MCF 10A (cell line): ENCODE measurements at regions of chr2 and their contacts with region 1.

Region 1: DNA sequence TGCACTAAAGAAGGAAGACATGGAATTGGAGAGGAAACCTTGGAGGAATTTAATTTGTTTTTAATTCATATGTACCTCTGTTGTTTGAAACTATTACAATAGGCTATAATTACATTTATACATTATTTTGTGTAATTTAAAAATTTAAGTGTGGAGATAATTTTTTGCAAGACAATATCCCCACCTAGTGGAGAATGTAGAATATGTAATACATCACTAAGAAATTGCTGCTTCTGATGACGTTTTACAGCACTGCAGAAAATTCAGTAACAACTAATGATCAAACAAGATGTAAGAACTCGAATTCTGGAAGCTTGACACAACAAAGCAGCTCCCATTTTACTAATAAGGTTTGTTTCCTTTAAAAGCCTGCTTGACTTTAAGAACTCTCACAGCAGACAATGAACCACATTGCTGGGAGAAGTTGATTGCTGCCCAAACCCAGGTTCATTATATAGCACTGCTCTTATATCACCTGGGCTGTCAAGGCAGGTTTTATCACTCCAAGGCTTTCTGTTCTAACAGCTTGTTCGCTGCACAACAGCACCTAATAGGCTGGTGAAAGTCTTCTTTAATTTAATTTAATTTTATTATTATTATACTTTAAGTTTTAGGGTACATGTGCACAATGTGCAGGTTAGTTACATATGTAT is 53.4 kb downstream of the THADA start:
- DNase-seq: peak; percentile 64
- H3K4me3 Mint-ChIP-seq: no peak overlapping the region
- H3K27ac Mint-ChIP-seq: no peak overlapping the region
- H3K4me1 Mint-ChIP-seq: peaks cover 14% of the 10 kb centered on the region
- H3K27me3 Mint-ChIP-seq: no peaks in the 10 kb centered on the region
- CTCF ChIP-seq: peak; percentile 40

Region 2: GRCh38 chr2:42810121-42810970 is 732.1 kb before region 1 on chr2:
- CTCF ChIA-PET with region 1: no interaction called
- POLR2A ChIA-PET with region 1: interaction called, 10 read pairs
- intact Hi-C with region 1: no loop called
- DNase-seq: peak; percentile 92
- H3K4me3 Mint-ChIP-seq: peak overlapping the region; percentile 80
- H3K27ac Mint-ChIP-seq: peak overlapping the region; percentile 84
- H3K4me1 Mint-ChIP-seq: peaks cover 13% of the 10 kb centered on the region
- H3K27me3 Mint-ChIP-seq: no peaks in the 10 kb centered on the region
- CTCF ChIP-seq: no peak

Region 3: GRCh38 chr2:42944779-42945415 is 597.5 kb before region 1 on chr2:
- CTCF ChIA-PET with region 1: interaction called, 23 read pairs
- POLR2A ChIA-PET with region 1: interaction called, 11 read pairs
- intact Hi-C with region 1: loop called (anchors 1 kb)
- DNase-seq: no peak
- H3K4me3 Mint-ChIP-seq: no peak overlapping the region
- H3K27ac Mint-ChIP-seq: no peak overlapping the region
- H3K4me1 Mint-ChIP-seq: peaks cover 10% of the 10 kb centered on the region
- H3K27me3 Mint-ChIP-seq: no peaks in the 10 kb centered on the region
- CTCF ChIP-seq: no peak

Region 4: DNA sequence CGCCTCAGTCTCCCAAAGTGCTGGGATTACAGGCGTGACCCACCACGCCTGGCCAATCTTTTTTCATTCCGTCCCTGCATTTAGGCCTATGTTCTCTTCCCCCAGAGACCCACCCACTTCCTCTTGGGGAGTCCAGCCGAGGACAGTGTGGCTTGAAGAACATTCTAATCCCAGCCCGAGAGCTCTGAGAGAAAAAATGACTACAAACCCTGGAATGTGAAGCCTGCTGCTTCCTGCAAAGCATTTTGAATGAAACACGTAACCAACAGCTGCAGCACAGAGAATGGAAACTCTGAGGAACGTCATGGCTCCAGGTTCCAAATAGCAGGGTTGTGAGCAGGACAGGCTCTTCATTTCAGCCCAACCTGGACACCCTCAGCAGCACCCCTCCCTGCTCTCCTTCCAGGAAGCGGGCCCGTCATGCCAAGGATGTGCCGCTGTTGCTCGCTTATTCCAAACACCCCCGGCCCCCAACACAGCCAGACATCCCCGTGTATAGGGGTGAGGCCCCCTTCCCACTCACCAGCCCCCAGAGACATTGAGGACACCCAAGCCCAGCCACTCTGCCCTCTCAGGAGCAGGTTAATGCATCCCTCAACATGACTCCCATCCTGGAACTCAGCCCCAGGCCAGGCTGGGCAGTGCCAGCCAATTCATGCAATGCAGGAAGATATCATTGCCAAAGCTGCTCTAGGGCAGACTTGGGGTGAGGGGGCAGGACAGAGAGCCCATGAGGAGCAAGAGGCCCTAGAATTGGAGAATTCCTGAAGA is 455.8 kb before region 1 on chr2:
- CTCF ChIA-PET with region 1: no interaction called
- POLR2A ChIA-PET with region 1: interaction called, 14 read pairs
- intact Hi-C with region 1: no loop called
- DNase-seq: peak; percentile 98
- H3K4me3 Mint-ChIP-seq: peak overlapping the region; percentile 48
- H3K27ac Mint-ChIP-seq: peak overlapping the region; percentile 94
- H3K4me1 Mint-ChIP-seq: peaks cover 60% of the 10 kb centered on the region
- H3K27me3 Mint-ChIP-seq: no peaks in the 10 kb centered on the region
- CTCF ChIP-seq: no peak

Region 5: DNA sequence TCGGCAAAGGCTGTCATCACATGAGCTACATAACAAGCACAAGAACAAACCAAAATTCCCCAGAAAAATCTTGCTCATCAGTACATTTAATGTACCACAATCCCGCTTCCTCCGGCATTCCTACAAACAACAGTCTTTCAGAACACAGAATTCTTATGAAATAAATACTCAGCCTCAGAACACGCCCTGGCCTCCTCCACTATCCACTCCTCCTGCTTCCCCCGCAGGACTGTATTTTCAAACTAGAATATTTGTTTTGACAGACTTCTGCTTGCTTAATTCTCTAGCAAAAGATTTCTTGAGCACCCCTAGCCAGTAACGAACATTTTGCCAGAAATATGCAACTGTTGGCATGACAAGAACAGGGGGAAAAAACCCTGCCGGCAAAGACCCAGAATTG is 77.8 kb before region 1 on chr2:
- CTCF ChIA-PET with region 1: interaction called, 5 read pairs
- POLR2A ChIA-PET with region 1: interaction called, 41 read pairs
- intact Hi-C with region 1: loop called (anchors 2 kb)
- DNase-seq: peak; percentile 59
- H3K4me3 Mint-ChIP-seq: peak overlapping the region; percentile 35
- H3K27ac Mint-ChIP-seq: peak overlapping the region; percentile 95
- H3K4me1 Mint-ChIP-seq: peaks cover 56% of the 10 kb centered on the region
- H3K27me3 Mint-ChIP-seq: no peaks in the 10 kb centered on the region
- CTCF ChIP-seq: no peak

Region 6: DNA sequence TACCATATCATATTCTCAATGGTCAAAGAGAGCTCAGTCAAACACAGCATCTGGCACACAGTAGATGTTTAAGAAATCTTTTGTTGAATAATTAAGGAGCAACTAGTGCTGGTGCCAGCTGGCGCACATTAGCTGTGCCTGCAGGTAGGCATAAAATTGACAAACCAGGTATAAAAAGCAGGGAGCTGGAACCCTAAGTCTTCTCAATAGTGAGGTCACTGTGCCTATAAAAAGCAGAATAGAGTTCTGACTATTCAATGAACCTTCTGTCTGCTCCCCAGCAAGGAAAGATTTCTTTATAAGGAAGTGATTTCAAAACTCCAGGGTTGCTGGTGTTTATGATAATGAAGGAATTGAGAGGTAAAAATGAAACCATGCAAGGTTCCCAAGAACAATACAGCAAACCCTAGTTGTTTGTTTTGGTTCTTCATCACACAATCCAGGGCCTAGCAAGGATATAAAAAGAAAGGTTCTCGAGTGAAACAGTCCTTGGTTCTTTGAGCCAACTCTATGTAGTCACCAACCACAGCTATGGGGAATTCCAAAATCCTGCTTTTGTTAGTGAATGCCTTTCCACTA is 22.7 kb before region 1 on chr2:
- CTCF ChIA-PET with region 1: interaction called, 16 read pairs
- POLR2A ChIA-PET with region 1: interaction called, 141 read pairs
- intact Hi-C with region 1: no loop called
- DNase-seq: peak; percentile 84
- H3K4me3 Mint-ChIP-seq: peak overlapping the region; percentile 41
- H3K27ac Mint-ChIP-seq: peak overlapping the region; percentile 71
- H3K4me1 Mint-ChIP-seq: peaks cover 47% of the 10 kb centered on the region
- H3K27me3 Mint-ChIP-seq: no peaks in the 10 kb centered on the region
- CTCF ChIP-seq: no peak